ENCODE measurements at regions of chr12 and their contacts with region 1.

Region 1: DNA sequence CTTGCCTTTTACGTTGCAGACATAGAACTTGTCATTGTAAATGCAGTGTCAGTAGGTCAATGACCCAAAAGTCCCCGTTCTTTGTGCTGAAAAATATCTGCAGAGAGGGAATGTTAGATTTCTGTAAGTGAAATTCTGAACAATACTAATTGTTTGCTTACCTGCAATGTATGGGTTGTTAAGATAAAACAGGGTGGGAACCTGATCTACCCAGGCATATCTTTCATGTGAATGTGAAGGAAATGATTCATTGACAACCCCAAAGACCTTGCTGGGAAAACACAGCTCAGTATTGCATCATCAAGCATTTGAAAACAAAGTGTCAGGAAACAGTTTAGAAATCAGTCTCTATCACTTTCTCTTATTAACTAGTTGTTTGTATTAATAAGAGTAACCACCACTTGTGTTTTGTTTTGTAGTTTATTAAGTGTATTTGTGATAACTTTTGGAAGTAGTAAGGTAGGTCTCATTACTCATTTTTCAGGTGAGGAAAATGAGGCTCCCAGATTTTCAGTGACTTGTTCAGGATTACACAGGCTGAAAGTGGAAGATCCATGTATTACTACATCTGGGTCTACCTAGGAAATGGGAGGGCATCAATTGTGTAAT is 57.9 kb upstream of the SLC38A2 start:
- DNase-seq: peak; percentile 93
- H3K4me3 Mint-ChIP-seq: peak overlapping the region; percentile 61
- H3K27ac Mint-ChIP-seq: peak overlapping the region; percentile 95
- H3K4me1 Mint-ChIP-seq: peaks cover 33% of the 10 kb centered on the region
- H3K27me3 Mint-ChIP-seq: no peaks in the 10 kb centered on the region
- CTCF ChIP-seq: no peak

Region 2: DNA sequence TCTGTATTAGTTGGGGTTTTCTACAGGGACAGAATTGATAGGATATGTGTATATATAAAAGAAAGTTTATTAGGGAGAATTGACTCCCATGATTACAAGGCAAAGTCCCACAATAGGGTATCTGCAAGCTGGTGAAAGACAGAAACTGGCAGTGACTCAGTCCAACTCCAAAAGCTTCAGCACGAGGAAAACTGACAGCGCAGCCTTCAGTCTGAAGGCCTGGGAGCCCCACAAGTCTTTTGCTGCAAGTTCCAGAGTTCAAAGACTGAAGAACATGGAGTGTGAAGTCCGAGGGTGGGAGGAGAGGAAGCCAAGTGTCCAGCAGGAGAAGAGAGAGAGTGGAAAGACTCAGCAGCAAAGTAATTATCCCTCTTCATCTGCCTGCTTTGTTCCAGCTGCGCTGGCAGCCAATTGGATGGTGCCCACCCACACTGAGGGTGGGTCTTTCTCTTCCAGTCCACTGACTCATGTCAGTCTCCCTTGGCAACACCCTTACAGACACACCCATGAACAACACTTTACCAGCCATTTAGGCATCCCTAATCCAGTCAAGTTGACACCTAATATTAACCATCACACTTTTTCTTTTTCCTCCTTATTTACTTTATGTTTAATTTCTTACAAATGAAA is 329.5 kb before region 1 on chr12:
- CTCF ChIA-PET with region 1: no interaction called
- POLR2A ChIA-PET with region 1: no interaction called
- intact Hi-C with region 1: no loop called
- DNase-seq: peak; percentile 32
- H3K4me3 Mint-ChIP-seq: no peak overlapping the region
- H3K27ac Mint-ChIP-seq: no peak overlapping the region
- H3K4me1 Mint-ChIP-seq: peaks cover 8% of the 10 kb centered on the region
- H3K27me3 Mint-ChIP-seq: no peaks in the 10 kb centered on the region
- CTCF ChIP-seq: no peak

Region 3: DNA sequence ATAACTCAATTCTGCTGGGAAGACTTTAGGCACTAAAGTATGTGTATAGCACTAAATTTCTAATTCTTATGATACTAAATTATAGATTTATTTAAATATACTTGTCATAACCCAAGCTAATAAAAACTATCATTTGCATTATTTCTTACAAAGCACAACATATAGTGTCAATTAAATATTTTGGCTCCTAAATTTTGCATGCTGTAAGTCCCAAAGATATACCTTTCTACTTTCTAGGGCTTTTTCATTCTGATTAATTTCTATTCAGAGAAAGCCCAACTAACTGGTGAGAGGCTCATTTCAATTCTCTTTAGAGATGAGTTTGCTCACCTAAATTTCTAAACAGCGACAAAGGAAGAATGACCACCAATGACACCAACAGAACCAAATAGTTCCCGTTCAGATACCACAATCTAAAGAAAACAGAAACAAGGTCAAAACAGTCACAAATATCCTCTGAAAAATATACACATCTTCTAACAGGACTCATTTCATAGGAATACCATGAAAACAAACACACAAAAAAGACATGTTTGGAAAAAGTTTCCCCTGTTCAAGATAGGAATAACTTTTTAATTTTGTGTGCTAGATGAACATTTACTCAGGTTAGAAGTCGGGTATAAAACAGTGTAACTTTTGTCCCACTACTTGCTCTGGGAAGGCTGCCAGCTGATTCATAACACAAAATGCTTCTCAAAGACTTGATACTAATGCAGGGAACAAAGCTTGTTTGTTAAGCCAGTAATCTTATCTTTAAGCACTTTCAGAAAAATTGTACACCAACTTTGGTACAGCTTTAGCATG is 65.5 kb before region 1 on chr12:
- CTCF ChIA-PET with region 1: no interaction called
- POLR2A ChIA-PET with region 1: interaction called, 41 read pairs
- intact Hi-C with region 1: no loop called
- DNase-seq: peak; percentile 85
- H3K4me3 Mint-ChIP-seq: peak overlapping the region; percentile 93
- H3K27ac Mint-ChIP-seq: no peak overlapping the region
- H3K4me1 Mint-ChIP-seq: peaks cover 24% of the 10 kb centered on the region
- H3K27me3 Mint-ChIP-seq: no peaks in the 10 kb centered on the region
- CTCF ChIP-seq: no peak

Region 4: DNA sequence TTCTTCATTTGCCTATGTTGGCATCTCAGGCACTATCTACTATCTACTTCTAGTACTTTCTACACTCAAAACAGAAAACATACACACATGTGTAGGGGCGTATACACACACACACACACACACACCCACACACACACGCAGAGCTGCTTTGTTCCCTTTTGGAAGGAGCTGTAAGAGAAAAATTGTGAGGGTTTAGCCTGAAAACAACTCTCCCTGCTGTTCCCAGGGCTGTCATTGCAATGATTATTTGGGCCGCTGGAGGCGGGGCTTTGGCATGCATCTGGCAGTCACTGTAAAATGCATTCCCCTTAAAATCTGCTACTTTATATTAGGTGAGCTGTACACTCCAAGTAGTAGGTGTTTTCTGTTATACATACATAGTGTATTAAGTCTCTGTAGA is 28.8 kb before region 1 on chr12:
- CTCF ChIA-PET with region 1: no interaction called
- POLR2A ChIA-PET with region 1: interaction called, 51 read pairs
- intact Hi-C with region 1: no loop called
- DNase-seq: peak; percentile 49
- H3K4me3 Mint-ChIP-seq: no peak overlapping the region
- H3K27ac Mint-ChIP-seq: peak overlapping the region; percentile 86
- H3K4me1 Mint-ChIP-seq: peaks cover 48% of the 10 kb centered on the region
- H3K27me3 Mint-ChIP-seq: no peaks in the 10 kb centered on the region
- CTCF ChIP-seq: peak; percentile 19

Region 5: GRCh38 chr12:46450279-46450748 is 19.9 kb after region 1 on chr12:
- CTCF ChIA-PET with region 1: no interaction called
- POLR2A ChIA-PET with region 1: interaction called, 111 read pairs
- intact Hi-C with region 1: no loop called
- DNase-seq: peak; percentile 73
- H3K4me3 Mint-ChIP-seq: no peak overlapping the region
- H3K27ac Mint-ChIP-seq: peak overlapping the region; percentile 90
- H3K4me1 Mint-ChIP-seq: peaks cover 64% of the 10 kb centered on the region
- H3K27me3 Mint-ChIP-seq: no peaks in the 10 kb centered on the region
- CTCF ChIP-seq: no peak

Region 6: GRCh38 chr12:46492471-46493351 is 62.3 kb after region 1 on chr12:
- CTCF ChIA-PET with region 1: no interaction called
- POLR2A ChIA-PET with region 1: interaction called, 26 read pairs
- intact Hi-C with region 1: loop called (anchors 5 kb)
- DNase-seq: peak; percentile 88
- H3K4me3 Mint-ChIP-seq: peak overlapping the region; percentile 61
- H3K27ac Mint-ChIP-seq: peak overlapping the region; percentile 100
- H3K4me1 Mint-ChIP-seq: peaks cover 32% of the 10 kb centered on the region
- H3K27me3 Mint-ChIP-seq: no peaks in the 10 kb centered on the region
- CTCF ChIP-seq: no peak

Region 7: DNA sequence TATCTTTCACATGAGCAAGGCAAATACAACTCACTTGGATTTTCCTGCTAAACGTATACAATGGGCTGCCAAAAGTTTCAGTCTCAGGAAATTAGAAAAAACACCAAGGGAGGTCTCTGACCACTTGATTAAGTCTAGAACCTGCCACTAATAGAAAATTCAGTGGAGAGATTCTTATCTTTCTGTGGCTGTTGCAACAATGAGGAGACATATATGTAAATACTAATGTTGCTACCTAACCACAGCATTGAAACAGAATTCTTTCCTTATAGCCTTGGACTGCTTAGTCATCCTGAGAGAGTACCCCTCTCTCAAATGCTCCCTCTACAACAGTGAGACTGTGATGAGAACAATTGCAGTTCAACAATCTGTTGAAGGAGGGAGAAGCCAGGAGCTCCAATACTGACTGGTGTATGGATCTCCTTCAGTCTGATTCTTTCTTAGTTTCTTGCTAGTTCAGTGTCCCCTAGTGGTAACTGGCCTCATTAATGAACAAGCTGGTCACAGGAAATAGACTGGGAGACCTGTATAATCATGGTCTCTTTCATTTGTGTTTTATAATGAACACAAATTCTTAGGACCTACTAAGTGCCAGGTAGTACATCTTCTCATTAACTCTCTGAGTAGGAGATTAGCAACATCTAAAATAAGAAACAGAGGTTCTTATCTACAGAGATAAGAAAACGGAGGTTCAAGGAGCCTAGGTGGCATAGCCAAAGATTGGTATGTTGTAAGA is 230.8 kb after region 1 on chr12:
- CTCF ChIA-PET with region 1: interaction called, 4 read pairs
- POLR2A ChIA-PET with region 1: interaction called, 15 read pairs
- intact Hi-C with region 1: loop called (anchors 5 kb)
- DNase-seq: peak; percentile 79
- H3K4me3 Mint-ChIP-seq: no peak overlapping the region
- H3K27ac Mint-ChIP-seq: peak overlapping the region; percentile 80
- H3K4me1 Mint-ChIP-seq: peaks cover 63% of the 10 kb centered on the region
- H3K27me3 Mint-ChIP-seq: no peaks in the 10 kb centered on the region
- CTCF ChIP-seq: peak; percentile 57

Region 8: DNA sequence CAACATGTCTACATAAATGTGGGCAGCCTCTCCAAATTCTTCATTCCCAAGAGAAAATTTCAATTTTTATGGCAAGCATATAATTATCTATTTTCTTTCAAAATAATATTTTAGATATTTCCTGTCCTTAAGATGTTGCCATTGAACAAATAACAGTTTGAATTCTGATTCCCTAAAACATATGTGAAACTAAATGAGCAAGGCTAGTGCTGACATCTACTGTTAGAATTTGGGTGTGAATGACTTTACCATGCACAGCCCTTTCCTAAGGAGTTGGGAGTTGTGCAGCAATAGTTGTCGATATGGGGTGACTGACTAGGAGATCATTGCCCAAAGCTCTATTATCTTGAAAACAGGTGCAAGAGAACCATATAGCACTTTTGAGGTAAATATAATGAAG is 503.5 kb after region 1 on chr12:
- CTCF ChIA-PET with region 1: no interaction called
- POLR2A ChIA-PET with region 1: no interaction called
- intact Hi-C with region 1: no loop called
- DNase-seq: peak; percentile 68
- H3K4me3 Mint-ChIP-seq: no peak overlapping the region
- H3K27ac Mint-ChIP-seq: no peak overlapping the region
- H3K4me1 Mint-ChIP-seq: peaks cover 6% of the 10 kb centered on the region
- H3K27me3 Mint-ChIP-seq: no peaks in the 10 kb centered on the region
- CTCF ChIP-seq: peak; percentile 71

Measured in MCF 10A (cell line).